Esophagus muscularis mucosa (tissue), 4 donors: ENCODE measurements at regions of chr2 and their contacts with region 1.

Region 1: DNA sequence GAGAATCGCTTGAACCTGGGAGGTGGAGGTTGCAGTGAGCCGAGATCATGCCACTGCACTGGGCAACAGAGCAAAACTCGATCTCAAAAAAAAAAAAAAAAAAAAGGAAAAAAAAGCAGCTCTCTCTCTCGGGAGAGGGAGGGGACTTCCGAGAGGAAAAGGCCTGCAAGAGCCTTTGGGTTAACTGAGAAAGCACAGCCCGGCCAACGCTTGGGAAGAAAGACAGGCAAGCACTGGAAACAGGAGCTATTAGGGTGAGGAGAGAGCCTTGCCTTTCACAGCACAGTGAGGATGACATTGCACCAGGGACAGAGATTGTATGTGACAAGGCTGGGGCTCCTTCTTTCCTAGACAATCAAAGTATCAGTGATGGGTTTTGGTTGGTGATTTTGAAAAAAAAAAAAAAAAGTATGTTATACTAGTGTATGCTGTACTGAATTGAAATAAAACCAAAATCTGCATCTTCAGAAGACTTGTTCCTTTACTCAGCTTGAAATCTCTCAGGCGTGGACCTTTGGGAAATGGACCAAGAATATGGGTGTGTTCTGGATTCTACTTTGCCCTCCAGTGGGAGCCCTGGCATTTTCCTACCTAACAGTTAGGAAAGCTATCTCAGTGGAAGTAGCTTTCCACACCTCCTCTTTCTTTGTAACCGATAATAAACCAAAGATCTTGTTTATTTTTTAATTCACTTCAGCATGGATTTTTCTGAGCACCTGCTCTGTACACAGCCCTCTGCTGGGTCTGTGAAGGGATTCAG is 16.7 kb downstream of the SRSF7 start:
- DNase-seq: no peak
- H3K4me3 ChIP-seq: no peak overlapping the region
- H3K27ac ChIP-seq: peak overlapping the region in 2 of 4 donors; percentile 27 to 86
- H3K4me1 ChIP-seq: peaks cover 0 to 50% (median 40%) of the 10 kb centered on the region in 4 donors
- H3K27me3 ChIP-seq: no peaks in the 10 kb centered on the region
- CTCF ChIP-seq: no peak
- EP300 ChIP-seq: no peak
- POLR2A ChIP-seq: no peak

Region 2: DNA sequence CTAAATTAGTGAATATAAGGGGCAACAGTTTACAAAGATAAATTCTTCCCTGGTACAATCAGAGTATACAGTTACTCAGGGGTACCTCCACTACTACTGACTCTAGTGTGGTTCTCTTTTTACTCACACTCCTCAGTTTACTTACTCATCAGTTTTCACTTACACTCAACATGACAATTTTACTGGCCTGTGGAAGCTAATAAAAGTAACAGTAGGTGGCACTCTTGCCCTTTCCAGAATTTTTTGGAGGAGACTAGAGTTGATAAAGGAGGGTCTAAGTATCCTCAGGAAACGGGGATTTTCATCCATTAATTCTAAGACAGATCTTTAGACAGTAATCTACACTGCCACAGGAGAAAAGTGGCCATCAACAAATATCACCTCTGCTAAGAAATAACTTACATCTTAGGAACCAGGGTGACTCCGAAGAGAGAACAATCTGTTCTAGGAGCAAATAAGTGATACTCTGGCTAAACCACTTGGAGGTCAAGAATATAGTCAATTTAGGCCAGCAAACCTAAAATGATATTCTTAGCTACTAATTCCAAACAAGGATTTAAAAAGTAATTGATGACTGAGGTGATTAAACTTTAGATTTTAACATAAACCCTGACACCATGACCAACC is 418.7 kb before region 1 on chr2:
- intact Hi-C with region 1: loop called (anchors 5 kb)
- DNase-seq: no peak
- H3K4me3 ChIP-seq: no peak overlapping the region
- H3K27ac ChIP-seq: peak overlapping the region; percentile 41 to 69 (median 53)
- H3K4me1 ChIP-seq: peaks cover 0 to 53% (median 49%) of the 10 kb centered on the region in 4 donors
- H3K27me3 ChIP-seq: no peaks in the 10 kb centered on the region
- CTCF ChIP-seq: peak; percentile 72 to 80 (median 76)
- EP300 ChIP-seq: no peak
- POLR2A ChIP-seq: no peak